Right lobe of liver (tissue), 6 donors: ENCODE measurements at regions of chr7 and their contacts with region 1.

Region 1: DNA sequence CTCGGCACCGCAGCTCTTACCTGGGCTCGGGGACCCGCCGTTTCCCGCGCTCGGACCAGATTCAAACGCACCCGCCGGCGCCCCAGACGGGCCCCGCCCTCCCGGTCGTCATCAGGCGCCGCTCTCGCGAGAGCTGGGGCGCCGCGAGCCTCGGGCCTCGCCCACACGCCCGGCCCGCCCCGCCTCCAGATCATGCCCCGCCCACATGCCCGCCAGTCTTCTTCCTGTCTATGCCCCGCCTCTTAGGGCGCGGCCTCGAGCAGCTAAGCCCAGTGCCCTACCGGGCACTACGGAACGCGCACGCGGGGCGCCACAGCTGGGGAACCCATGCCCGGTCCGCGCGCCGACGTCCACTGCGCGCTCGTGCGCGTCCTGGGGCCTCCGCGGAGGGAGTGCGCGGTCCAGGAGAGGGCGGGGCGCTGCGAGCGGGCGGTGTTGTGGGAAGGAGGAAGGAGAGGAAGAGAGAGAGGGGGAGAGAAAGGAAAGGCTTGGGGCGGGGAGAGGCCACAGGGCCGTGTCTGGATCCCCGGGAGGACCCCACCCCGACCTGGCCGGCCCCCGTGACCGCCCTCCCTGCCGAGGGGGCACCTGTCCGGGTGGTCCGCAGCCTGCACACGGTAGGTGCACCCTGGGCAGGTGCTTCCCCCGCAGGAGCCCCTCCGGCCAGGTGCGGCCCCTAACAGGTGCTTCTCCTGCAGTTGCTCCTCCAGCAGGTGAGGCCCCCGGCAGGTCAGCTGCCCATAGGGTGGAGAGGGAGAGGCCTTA is at the start of gene NCAPG2:
- DNase-seq: peak; percentile 99 to 100 (median 100)
- ATAC-seq: peak; percentile 98 to 99 (median 99)
- H3K4me3 ChIP-seq: peak within 1 kb of the TSS; percentile 80 to 97 (median 93)
- H3K27ac ChIP-seq: peak within 1 kb of the TSS; percentile 59 to 87 (median 68)
- H3K4me1 ChIP-seq: no peaks in the 10 kb centered on the region
- H3K27me3 ChIP-seq: no peaks in the 10 kb centered on the region
- CTCF ChIP-seq: peak; percentile 17 to 73 (median 26)
- POLR2A ChIP-seq: peak; percentile 93
- total RNA-seq, gene NCAPG2: 2.7 to 4.8 (median 4.2) TPM

Region 2: DNA sequence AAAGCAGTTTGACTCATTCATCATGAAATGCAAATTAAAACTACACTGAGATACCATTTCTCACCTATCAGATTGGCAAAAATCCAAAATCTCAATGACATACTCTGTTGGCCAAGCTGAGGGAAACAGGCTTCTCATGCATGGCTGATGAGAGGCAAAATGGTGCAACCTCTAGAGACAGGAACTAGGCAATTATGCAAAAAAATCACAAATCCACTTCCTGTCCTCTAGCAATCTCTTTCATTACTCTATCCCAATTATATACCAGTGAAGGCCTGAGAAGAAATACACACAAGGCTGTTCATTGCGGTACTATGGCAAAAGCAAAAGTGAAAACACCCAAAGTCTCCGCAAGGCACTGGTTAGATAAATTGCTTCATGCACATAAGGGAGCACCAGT is 91.4 kb before region 1 on chr7:
- intact Hi-C with region 1: no loop called
- DNase-seq: no peak
- ATAC-seq: no peak
- H3K4me3 ChIP-seq: no peak overlapping the region
- H3K27ac ChIP-seq: no peak overlapping the region
- H3K4me1 ChIP-seq: no peaks in the 10 kb centered on the region
- H3K27me3 ChIP-seq: no peaks in the 10 kb centered on the region
- CTCF ChIP-seq: no peak
- POLR2A ChIP-seq: no peak

Region 3: GRCh38 chr7:158782761-158783401 is 78.0 kb after region 1 on chr7:
- intact Hi-C with region 1: no loop called
- DNase-seq: no peak
- ATAC-seq: peak; percentile 56 to 77 (median 68)
- H3K4me3 ChIP-seq: no peak overlapping the region
- H3K27ac ChIP-seq: no peak overlapping the region
- H3K4me1 ChIP-seq: no peaks in the 10 kb centered on the region
- H3K27me3 ChIP-seq: no peaks in the 10 kb centered on the region
- CTCF ChIP-seq: peak in 3 of 4 donors; percentile 8 to 23 (median 10)
- POLR2A ChIP-seq: no peak

Region 4: GRCh38 chr7:158796542-158797066 is 91.7 kb after region 1 on chr7:
- intact Hi-C with region 1: no loop called
- DNase-seq: no peak
- ATAC-seq: peak in 1 of 4 donors; percentile 28
- H3K4me3 ChIP-seq: no peak overlapping the region
- H3K27ac ChIP-seq: no peak overlapping the region
- H3K4me1 ChIP-seq: no peaks in the 10 kb centered on the region
- H3K27me3 ChIP-seq: no peaks in the 10 kb centered on the region
- CTCF ChIP-seq: no peak
- POLR2A ChIP-seq: no peak

Region 5: GRCh38 chr7:158829342-158830210 is 124.7 kb after region 1 on chr7 and contains the start of gene ESYT2:
- intact Hi-C with region 1: loop called in 1 of 2 experiments (anchors 5 kb)
- DNase-seq: peak; percentile 100
- ATAC-seq: peak; percentile 91 to 95 (median 92)
- H3K4me3 ChIP-seq: peak within 1 kb of the TSS; percentile 60 to 75 (median 71)
- H3K27ac ChIP-seq: peak within 1 kb of the TSS; percentile 93 to 99 (median 98)
- H3K4me1 ChIP-seq: peaks cover 0 to 7% (median 0%) of the 10 kb centered on the region in 4 donors
- H3K27me3 ChIP-seq: no peaks in the 10 kb centered on the region
- CTCF ChIP-seq: peak in 3 of 4 donors; percentile 8 to 17 (median 13)
- POLR2A ChIP-seq: peak; percentile 98
- total RNA-seq, gene ESYT2: 19.7 to 28.7 (median 24.2) TPM

Region 6: DNA sequence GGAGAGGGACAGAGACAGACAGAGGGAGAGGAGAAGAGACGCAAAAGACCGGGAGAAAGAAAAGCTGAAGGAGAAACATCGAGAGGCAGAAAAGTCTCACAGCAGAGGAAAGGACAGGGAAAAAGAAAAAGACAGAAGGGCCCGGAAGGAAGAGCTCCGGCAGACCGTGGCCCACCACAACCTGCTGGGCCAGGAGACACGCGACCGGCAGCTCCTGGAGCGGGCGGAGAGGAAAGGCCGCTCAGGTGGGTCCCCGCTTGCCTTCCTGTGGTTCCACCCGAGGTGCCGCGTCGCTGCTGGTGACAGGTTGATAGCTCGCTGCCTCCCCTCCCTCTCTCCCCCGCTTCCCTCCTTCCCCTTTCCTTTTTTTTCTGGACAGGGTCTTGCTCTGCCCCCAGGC is 166.4 kb after region 1 on chr7:
- intact Hi-C with region 1: no loop called
- DNase-seq: no peak
- ATAC-seq: peak in 1 of 4 donors; percentile 26
- H3K4me3 ChIP-seq: no peak overlapping the region
- H3K27ac ChIP-seq: no peak overlapping the region
- H3K4me1 ChIP-seq: no peaks in the 10 kb centered on the region
- H3K27me3 ChIP-seq: no peaks in the 10 kb centered on the region
- CTCF ChIP-seq: no peak
- POLR2A ChIP-seq: no peak